ENCODE measurements at regions of chr20 and their contacts with region 1.

Region 1: DNA sequence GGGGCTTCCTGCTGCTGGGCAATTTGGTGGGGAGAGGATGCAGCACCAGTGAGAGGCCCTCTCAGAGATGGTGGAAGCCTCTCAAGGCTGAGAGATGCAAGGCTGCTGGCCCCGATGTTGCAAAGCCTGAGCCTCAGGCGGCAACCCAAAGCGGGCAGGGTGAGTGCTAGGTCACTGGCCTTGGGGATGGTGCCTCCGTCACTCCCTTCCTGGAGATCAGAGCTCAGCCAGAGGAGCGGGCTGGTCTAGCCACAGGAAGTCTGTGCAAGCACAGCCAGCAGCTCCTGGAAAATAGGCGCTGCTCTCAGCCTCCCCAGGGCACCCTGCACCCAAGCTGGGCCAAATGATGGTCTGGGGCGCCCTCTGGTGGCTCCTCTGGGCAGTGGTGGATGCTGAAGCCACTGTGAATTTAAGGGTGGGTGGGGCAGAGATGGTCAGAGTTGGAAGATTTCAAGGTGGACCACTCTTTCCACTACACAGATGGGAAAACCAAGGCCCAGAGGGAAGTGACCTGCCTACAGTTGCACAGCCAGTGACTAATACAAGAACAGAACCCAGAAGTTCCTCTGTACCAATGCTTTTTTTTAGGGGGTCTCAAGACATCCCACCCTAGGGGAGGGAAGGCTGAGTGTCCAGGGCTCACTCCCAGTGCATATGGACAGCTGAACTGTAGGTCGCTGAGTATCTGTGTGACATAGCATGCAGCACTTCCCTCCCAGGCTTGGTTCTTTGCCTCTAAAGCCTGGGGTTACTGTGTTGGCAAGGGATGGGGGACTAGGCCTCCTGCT is 20.8 kb downstream of the C20orf203 start:
- DNase-seq: peak; percentile 85 to 90 (median 86)
- ATAC-seq: peak; percentile 89
- H3K4me3 ChIP-seq: no peak overlapping the region
- H3K27ac ChIP-seq: no peak overlapping the region
- H3K4me1 ChIP-seq: no peaks in the 10 kb centered on the region
- H3K27me3 ChIP-seq: no peaks in the 10 kb centered on the region
- CTCF ChIP-seq: peak; percentile 87 to 98 (median 95)
- POLR2A ChIP-seq: no peak

Region 2: GRCh38 chr20:32521780-32522525 is 131.0 kb before region 1 on chr20:
- intact Hi-C with region 1: loop called (anchors 5 kb)
- DNase-seq: peak; percentile 72 to 81 (median 80)
- ATAC-seq: peak; percentile 82
- H3K4me3 ChIP-seq: no peak overlapping the region
- H3K27ac ChIP-seq: no peak overlapping the region
- H3K4me1 ChIP-seq: peaks cover 22% of the 10 kb centered on the region
- H3K27me3 ChIP-seq: no peaks in the 10 kb centered on the region
- CTCF ChIP-seq: peak; percentile 67 to 94 (median 85)
- POLR2A ChIP-seq: no peak